GM10248 (cell line): ENCODE measurements at regions of chr13 and their contacts with region 1.

Region 1: DNA sequence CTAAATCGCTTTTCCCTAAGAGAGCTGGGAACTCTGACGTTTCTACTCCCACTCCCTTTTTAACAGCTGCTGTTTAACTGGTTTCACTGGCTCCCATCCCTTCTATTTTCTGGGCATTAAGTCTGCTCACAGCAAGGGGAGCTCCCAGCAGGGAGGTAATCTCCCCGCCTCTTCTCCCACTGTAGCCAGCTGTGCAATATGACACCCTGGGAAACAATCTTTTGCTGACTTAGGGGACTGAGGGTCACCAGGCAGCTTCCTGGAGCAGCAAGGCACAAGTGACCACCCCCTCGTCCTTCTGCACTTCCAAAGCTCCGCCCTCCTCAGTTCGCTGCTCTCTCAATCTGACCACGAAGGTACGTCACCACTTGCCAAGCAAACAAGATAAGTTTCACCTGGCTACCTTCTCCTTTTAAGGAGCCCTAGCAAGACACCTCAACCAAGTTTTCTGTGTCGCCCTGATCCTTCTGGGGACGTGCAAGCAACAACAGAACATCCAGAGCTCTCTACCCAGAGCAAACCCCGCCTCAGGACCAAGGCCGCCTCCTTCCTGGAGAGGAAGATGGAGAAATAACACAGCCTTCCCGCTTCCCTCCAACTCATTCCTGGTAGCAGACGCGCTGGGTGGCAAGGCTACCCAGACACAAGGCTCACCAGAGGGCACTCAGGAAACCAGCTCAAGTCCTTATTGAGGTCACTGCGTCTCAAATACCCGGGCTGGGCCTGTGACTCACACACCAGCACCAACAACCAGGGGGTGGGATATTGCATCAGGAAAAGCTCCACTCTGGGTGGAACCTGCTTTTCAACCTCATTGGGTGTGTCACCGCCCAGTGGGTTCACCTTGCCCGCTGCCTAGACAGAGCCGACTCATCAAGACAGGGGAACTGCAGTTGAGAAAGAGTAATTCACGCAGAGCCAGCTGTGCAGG is 92.4 kb downstream of the STK24 start:
- DNase-seq: peak; percentile 76
- CTCF ChIP-seq: no peak

Region 2: GRCh38 chr13:98307463-98308085 is 177.0 kb before region 1 on chr13:
- CTCF ChIA-PET with region 1: no interaction called
- POLR2A ChIA-PET with region 1: no interaction called
- DNase-seq: no peak
- CTCF ChIP-seq: no peak

Region 3: DNA sequence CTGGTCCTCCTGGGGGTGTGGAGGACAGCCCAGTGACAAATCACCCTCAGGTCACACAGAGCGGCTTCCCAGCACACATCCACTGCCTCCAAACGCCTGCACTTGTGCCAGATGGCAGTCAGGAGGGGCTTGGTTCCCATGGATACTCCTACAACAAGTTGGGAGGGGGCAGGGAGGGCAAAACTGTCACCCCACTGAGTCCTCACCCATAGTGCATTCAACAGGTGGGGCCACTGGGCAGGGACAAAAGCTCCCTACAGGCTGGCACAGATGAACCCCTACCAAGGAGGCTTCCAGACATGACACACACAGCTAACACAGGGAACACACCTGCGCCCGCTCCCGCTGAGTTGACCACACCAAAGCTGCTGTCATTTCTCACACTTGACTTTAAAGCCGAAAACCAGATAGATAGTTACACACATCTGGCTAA is 28.1 kb before region 1 on chr13:
- CTCF ChIA-PET with region 1: no interaction called
- POLR2A ChIA-PET with region 1: no interaction called
- DNase-seq: no peak
- CTCF ChIP-seq: no peak

Region 4: GRCh38 chr13:98509271-98510155 is 25.0 kb after region 1 on chr13:
- CTCF ChIA-PET with region 1: interaction called, 12 read pairs
- POLR2A ChIA-PET with region 1: interaction called, 3 read pairs
- DNase-seq: no peak
- CTCF ChIP-seq: no peak